ENCODE measurements at regions of chr9 and their contacts with region 1.

Region 1: GRCh38 chr9:92140074-92140753 is 25.0 kb upstream of the SPTLC1 start:
- DNase-seq: peak; percentile 61 to 67 (median 64)
- H3K4me3 ChIP-seq: peak overlapping the region in 1 of 2 donors; percentile 23
- H3K4me3 Mint-ChIP-seq: peak overlapping the region in 6 of 8 donors; percentile 45 to 89 (median 72)
- H3K27ac ChIP-seq: no peak overlapping the region
- H3K27ac Mint-ChIP-seq: no peak overlapping the region
- H3K4me1 ChIP-seq: peaks cover 8% of the 10 kb centered on the region
- H3K4me1 Mint-ChIP-seq: peaks cover 3 to 14% (median 10%) of the 10 kb centered on the region in 4 donors
- H3K27me3 ChIP-seq: peaks cover 6% of the 10 kb centered on the region
- H3K27me3 Mint-ChIP-seq: peaks cover 33 to 43% of the 10 kb centered on the region in 2 donors

Region 2: GRCh38 chr9:92115071-92115858 is 24.9 kb before region 1 on chr9 and contains the start of gene SPTLC1:
- CTCF ChIA-PET with region 1: interaction called, 29 read pairs
- POLR2A ChIA-PET with region 1: no interaction called
- intact Hi-C with region 1: no loop called
- DNase-seq: peak; percentile 90 to 95 (median 94)
- H3K4me3 ChIP-seq: peak within 1 kb of the TSS; percentile 66 to 90
- H3K4me3 Mint-ChIP-seq: peak within 1 kb of the TSS; percentile 97 to 99 (median 99)
- H3K27ac ChIP-seq: peak within 1 kb of the TSS; percentile 89
- H3K27ac Mint-ChIP-seq: peak within 1 kb of the TSS; percentile 96 to 100 (median 99)
- H3K4me1 ChIP-seq: peaks cover 26% of the 10 kb centered on the region
- H3K4me1 Mint-ChIP-seq: peaks cover 26 to 48% (median 34%) of the 10 kb centered on the region in 4 donors
- H3K27me3 ChIP-seq: no peaks in the 10 kb centered on the region
- H3K27me3 Mint-ChIP-seq: no peaks in the 10 kb centered on the region
- total RNA-seq, gene SPTLC1: 56.8 to 57.9 TPM

Region 3: DNA sequence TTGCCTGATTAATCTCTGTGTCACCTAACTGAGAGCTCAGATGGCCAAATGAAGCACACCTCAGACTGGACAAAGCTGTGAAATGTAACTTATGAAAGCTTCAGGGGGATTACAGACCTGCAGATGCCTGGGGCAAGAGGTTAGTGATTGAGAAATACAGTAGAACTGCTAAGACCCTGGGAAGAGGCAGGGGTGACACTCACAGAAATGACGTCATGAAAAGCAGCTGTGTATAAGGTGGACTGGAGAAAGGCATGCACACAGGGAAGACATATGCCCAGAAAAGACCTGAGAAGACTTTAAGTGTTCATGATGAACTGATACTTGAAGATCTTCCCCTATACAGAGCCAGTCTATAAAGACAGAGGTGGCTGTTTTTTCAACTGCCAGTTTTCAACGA is 24.3 kb after region 1 on chr9:
- CTCF ChIA-PET with region 1: interaction called, 18 read pairs
- POLR2A ChIA-PET with region 1: no interaction called
- intact Hi-C with region 1: no loop called
- DNase-seq: no peak
- H3K4me3 ChIP-seq: no peak overlapping the region
- H3K4me3 Mint-ChIP-seq: no peak overlapping the region
- H3K27ac ChIP-seq: no peak overlapping the region
- H3K27ac Mint-ChIP-seq: no peak overlapping the region
- H3K4me1 ChIP-seq: no peaks in the 10 kb centered on the region
- H3K4me1 Mint-ChIP-seq: no peaks in the 10 kb centered on the region
- H3K27me3 ChIP-seq: no peaks in the 10 kb centered on the region
- H3K27me3 Mint-ChIP-seq: peaks cover 19 to 30% of the 10 kb centered on the region in 2 donors

Region 4: DNA sequence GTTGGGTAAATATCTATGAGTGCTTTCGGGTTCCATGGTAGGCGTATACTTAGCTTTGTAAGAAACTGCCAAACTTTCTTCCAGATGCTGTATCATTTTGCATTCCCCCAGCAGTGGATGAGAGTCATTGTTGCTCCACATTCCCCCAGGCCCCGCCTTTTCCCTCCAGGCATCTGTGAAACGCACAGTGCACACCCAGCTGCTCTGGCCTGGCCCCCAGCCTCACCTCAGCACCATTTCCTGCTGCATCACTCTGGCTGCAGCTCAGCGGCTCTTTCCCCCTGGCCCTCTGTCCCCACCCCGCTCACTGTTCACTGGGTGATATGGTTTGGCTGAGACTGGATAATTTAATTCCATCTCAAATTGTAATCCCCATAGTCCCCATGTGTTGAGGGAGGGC is 51.6 kb after region 1 on chr9:
- CTCF ChIA-PET with region 1: no interaction called
- POLR2A ChIA-PET with region 1: no interaction called
- intact Hi-C with region 1: no loop called
- DNase-seq: no peak
- H3K4me3 ChIP-seq: no peak overlapping the region
- H3K4me3 Mint-ChIP-seq: no peak overlapping the region
- H3K27ac ChIP-seq: no peak overlapping the region
- H3K27ac Mint-ChIP-seq: no peak overlapping the region
- H3K4me1 ChIP-seq: no peaks in the 10 kb centered on the region
- H3K4me1 Mint-ChIP-seq: no peaks in the 10 kb centered on the region
- H3K27me3 ChIP-seq: no peaks in the 10 kb centered on the region
- H3K27me3 Mint-ChIP-seq: peaks cover 14 to 15% of the 10 kb centered on the region in 2 donors

Region 5: GRCh38 chr9:92438900-92439526 is 298.8 kb after region 1 on chr9:
- CTCF ChIA-PET with region 1: interaction called, 14 read pairs
- POLR2A ChIA-PET with region 1: no interaction called
- intact Hi-C with region 1: loop called (anchors 2 kb)
- DNase-seq: peak in 1 of 5 donors; percentile 4
- H3K4me3 ChIP-seq: no peak overlapping the region
- H3K4me3 Mint-ChIP-seq: no peak overlapping the region
- H3K27ac ChIP-seq: no peak overlapping the region
- H3K27ac Mint-ChIP-seq: no peak overlapping the region
- H3K4me1 ChIP-seq: peaks cover 11% of the 10 kb centered on the region
- H3K4me1 Mint-ChIP-seq: peaks cover 4 to 10% (median 9%) of the 10 kb centered on the region in 4 donors
- H3K27me3 ChIP-seq: no peaks in the 10 kb centered on the region
- H3K27me3 Mint-ChIP-seq: no peaks in the 10 kb centered on the region

Region 6: GRCh38 chr9:92706216-92706940 is 566.2 kb after region 1 on chr9:
- CTCF ChIA-PET with region 1: interaction called, 4 read pairs
- POLR2A ChIA-PET with region 1: no interaction called
- intact Hi-C with region 1: loop called (anchors 2 kb)
- DNase-seq: peak in 4 of 5 donors; percentile 21 to 39 (median 36)
- H3K4me3 ChIP-seq: no peak overlapping the region
- H3K4me3 Mint-ChIP-seq: no peak overlapping the region
- H3K27ac ChIP-seq: no peak overlapping the region
- H3K27ac Mint-ChIP-seq: peak overlapping the region in 6 of 7 donors; percentile 5 to 82 (median 35)
- H3K4me1 ChIP-seq: peaks cover 9% of the 10 kb centered on the region
- H3K4me1 Mint-ChIP-seq: peaks cover 13 to 20% (median 14%) of the 10 kb centered on the region in 4 donors
- H3K27me3 ChIP-seq: no peaks in the 10 kb centered on the region
- H3K27me3 Mint-ChIP-seq: no peaks in the 10 kb centered on the region

Measured in CD4-positive, alpha-beta memory T cell (primary cell).